MCF 10A (cell line): ENCODE measurements at regions of chr6 and their contacts with region 1.

Region 1: GRCh38 chr6:28542440-28543296 is 17.0 kb downstream of the GPX5 start:
- DNase-seq: peak; percentile 90
- H3K4me3 Mint-ChIP-seq: peak overlapping the region; percentile 85
- H3K27ac Mint-ChIP-seq: peak overlapping the region; percentile 85
- H3K4me1 Mint-ChIP-seq: peaks cover 7% of the 10 kb centered on the region
- H3K27me3 Mint-ChIP-seq: peaks cover 18% of the 10 kb centered on the region
- CTCF ChIP-seq: peak; percentile 45

Region 2: DNA sequence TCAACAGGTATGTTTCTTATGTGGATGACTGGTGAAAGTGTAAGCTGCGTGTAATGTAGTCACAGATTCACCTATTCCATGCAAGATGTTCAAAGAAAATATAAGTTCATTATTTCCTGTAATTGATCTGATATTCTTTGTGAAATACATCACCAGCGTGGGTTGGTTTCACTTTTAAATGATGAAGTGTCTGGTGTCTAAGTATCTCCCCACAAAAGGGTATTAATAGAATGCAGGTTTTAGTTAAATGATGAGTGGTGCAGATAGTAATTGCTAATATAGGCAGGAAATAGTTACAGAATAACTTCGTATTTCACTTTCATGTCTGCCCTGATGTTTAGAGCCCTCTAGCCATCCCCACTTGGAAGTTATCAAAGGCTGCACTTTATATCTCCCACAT is 239.1 kb before region 1 on chr6:
- CTCF ChIA-PET with region 1: no interaction called
- POLR2A ChIA-PET with region 1: no interaction called
- intact Hi-C with region 1: no loop called
- DNase-seq: no peak
- H3K4me3 Mint-ChIP-seq: no peak overlapping the region
- H3K27ac Mint-ChIP-seq: no peak overlapping the region
- H3K4me1 Mint-ChIP-seq: no peaks in the 10 kb centered on the region
- H3K27me3 Mint-ChIP-seq: no peaks in the 10 kb centered on the region
- CTCF ChIP-seq: no peak

Region 3: DNA sequence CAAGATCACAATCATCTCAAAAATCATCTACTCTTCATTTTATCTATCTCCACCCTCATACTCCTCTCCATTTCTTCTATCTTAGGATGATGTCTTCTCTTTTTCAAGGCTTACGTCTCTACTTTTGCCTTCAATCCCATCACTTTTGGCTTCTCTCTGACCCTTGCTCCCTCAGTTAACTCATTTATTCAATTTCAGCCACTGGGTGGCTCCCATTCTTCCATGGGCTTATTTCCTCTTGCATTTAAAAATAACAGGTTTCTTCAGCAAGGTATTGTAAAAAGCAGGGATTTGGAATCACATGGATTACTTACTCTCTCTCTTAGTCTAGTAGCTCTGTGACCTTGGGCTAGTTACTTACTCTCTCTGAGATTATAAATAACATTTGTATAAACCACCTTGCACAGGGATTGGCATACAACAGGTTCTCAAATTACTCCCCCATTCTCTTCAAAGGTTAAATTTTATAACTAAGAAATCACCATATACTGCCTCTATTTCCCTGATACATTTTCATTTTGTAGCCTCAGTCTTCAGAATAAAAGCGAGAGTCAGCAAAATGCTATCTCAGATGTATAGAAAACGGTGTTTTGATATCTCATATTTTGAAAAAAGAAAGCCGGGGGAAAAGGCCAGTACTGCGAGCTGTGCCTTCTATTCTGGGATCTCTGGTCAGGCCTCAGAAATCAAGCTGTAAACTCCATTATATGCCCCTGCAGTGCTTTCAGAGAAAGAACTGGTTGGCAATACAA is 148.6 kb before region 1 on chr6:
- CTCF ChIA-PET with region 1: no interaction called
- POLR2A ChIA-PET with region 1: no interaction called
- intact Hi-C with region 1: loop called (anchors 2 kb)
- DNase-seq: peak; percentile 35
- H3K4me3 Mint-ChIP-seq: no peak overlapping the region
- H3K27ac Mint-ChIP-seq: no peak overlapping the region
- H3K4me1 Mint-ChIP-seq: peaks cover 31% of the 10 kb centered on the region
- H3K27me3 Mint-ChIP-seq: no peaks in the 10 kb centered on the region
- CTCF ChIP-seq: peak; percentile 33